Activated T-helper 1 cell treated with anti-CD3 and anti-CD28 coated beads, Interleukin-12 subunit alpha, Interleukin-12 subunit beta, Interleukin-2, Interleukin-4 antibody, amounts not matched to agents 30 ng/mL and 10 ng/mL and 1 ng/mL, durations not matched to agents 14 hours and 24 hours and 36 hours (primary cell): ENCODE measurements at regions of chr4 and their contacts with region 1.

Region 1: GRCh38 chr4:38334810-38335537 is 329.0 kb upstream of the KLF3 start:
- DNase-seq: no peak
- H3K4me3 Mint-ChIP-seq: peak overlapping the region; percentile 22
- H3K27ac Mint-ChIP-seq: peak overlapping the region; percentile 55
- H3K4me1 Mint-ChIP-seq: peaks cover 32% of the 10 kb centered on the region
- H3K27me3 Mint-ChIP-seq: peaks cover 42% of the 10 kb centered on the region

Region 2: GRCh38 chr4:37946503-37947179 is 388.3 kb before region 1 on chr4:
- intact Hi-C with region 1: no loop called
- DNase-seq: no peak
- H3K4me3 Mint-ChIP-seq: no peak overlapping the region
- H3K27ac Mint-ChIP-seq: no peak overlapping the region
- H3K4me1 Mint-ChIP-seq: peaks cover 7% of the 10 kb centered on the region
- H3K27me3 Mint-ChIP-seq: peaks cover 1% of the 10 kb centered on the region

Region 3: DNA sequence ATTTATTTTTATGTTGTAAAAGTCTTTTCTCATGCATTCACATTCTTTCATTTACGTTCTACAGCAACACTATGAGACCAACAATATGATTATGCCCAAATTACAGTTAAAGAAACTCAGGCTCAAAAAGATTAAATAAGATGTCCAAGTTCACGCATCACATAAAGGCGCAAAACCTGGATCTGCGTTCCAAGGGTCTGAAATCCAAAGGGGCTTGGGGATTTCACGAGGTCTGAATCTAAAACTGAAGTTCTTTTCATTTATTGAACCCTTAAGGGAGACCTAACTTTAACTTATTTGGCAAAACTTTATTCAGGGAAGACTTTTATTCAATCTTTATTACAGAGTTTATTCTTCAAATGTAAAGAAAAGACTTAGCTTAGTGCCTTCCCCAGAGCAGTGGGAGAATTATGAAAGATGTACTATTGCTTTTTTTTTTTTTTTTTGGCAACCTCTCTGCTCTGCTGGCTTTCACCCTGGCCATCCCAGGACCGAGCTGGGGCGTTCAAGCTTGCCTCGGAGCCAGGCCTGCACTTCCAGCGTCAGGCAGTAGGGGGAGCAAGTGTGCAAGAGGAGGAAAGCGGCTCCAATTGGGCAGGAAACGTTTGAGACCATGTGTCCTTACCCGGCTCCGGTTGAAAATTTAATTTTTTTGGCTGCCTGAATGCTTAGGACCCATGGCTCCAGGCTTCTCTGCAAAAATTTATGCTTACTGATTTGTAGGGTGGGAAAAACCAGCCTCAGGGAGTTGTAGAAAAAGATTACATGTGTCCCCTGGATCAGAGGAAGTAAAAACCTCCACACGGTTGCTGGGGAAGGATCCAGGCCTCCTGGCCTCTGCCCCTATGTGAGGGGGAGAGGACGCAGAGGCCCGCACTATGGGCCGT is 15.3 kb before region 1 on chr4:
- intact Hi-C with region 1: loop called (anchors 1 kb)
- DNase-seq: peak; percentile 83
- H3K4me3 Mint-ChIP-seq: peak overlapping the region; percentile 48
- H3K27ac Mint-ChIP-seq: peak overlapping the region; percentile 79
- H3K4me1 Mint-ChIP-seq: peaks cover 55% of the 10 kb centered on the region
- H3K27me3 Mint-ChIP-seq: peaks cover 5% of the 10 kb centered on the region

Region 4: GRCh38 chr4:38523524-38524448 is 188.8 kb after region 1 on chr4:
- intact Hi-C with region 1: loop called (anchors 5 kb)
- DNase-seq: peak; percentile 48
- H3K4me3 Mint-ChIP-seq: peak overlapping the region; percentile 19
- H3K27ac Mint-ChIP-seq: peak overlapping the region; percentile 51
- H3K4me1 Mint-ChIP-seq: peaks cover 23% of the 10 kb centered on the region
- H3K27me3 Mint-ChIP-seq: peaks cover 32% of the 10 kb centered on the region